ENCODE measurements at regions of chr2 and their contacts with region 1.

Region 1: GRCh38 chr2:75608684-75609333 is 37.8 kb upstream of the MRPL19 start:
- DNase-seq: peak; percentile 20 to 73 (median 49)
- H3K4me3 ChIP-seq: no peak overlapping the region
- H3K27ac ChIP-seq: no peak overlapping the region
- H3K4me1 ChIP-seq: no peaks in the 10 kb centered on the region
- H3K27me3 ChIP-seq: no peaks in the 10 kb centered on the region
- CTCF ChIP-seq: peak; percentile 66 to 93 (median 81)
- POLR2A ChIP-seq: no peak

Region 2: GRCh38 chr2:75466708-75467311 is 142.0 kb before region 1 on chr2:
- intact Hi-C with region 1: loop called (anchors 2 to 10 kb)
- DNase-seq: peak in 5 of 7 donors; percentile 23 to 55 (median 33)
- H3K4me3 ChIP-seq: no peak overlapping the region
- H3K27ac ChIP-seq: no peak overlapping the region
- H3K4me1 ChIP-seq: no peaks in the 10 kb centered on the region
- H3K27me3 ChIP-seq: peaks cover 3% of the 10 kb centered on the region
- CTCF ChIP-seq: peak in 2 of 6 experiments; percentile 21 to 33
- POLR2A ChIP-seq: no peak

Measured in adrenal gland (tissue), 19 donors.